Right cardiac atrium (tissue), 5 donors: ENCODE measurements at regions of chr20 and their contacts with region 1.

Region 1: GRCh38 chr20:47886460-47887041 is 101.3 kb upstream of the SULF2 start:
- DNase-seq: no peak
- ATAC-seq: no peak
- H3K4me3 ChIP-seq: no peak overlapping the region
- H3K27ac ChIP-seq: no peak overlapping the region
- H3K4me1 ChIP-seq: no peaks in the 10 kb centered on the region
- H3K27me3 ChIP-seq: no peaks in the 10 kb centered on the region

Region 2: DNA sequence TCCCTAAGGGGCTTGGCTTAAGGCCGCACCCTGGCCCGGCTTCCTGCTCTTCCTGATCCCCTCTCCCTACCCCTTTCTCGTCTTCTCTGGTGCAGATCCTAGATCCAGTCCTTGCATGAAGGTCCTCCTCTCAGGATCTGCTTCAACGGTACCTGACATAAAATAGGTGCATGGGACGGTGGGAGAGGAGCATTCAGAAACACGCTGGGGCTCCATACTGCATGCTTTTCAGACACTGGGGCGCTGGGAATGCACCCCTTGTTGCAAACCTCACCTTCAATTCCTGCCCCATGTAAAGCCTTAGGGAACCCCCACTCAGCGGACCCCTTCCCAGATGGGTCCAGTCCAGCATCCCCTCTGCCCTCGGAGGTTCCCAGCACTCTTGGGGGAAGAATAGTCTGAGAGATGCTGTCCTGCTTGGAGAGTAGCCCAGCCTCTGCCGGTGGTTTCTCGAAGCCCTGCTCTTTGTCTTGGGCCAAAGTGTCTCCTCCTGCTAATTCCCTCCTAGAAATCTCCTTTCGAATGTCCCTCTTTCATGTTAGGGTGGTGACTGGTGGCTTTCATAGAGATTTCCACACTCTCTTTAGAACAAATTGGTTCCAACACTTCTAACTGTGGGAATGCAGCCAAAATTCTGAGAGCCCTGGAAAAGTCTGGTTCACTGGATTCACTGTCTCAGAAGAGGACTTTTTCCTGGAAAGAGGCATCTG is 76.5 kb before region 1 on chr20:
- intact Hi-C with region 1: loop called in 1 of 4 experiments (anchors 10 kb)
- DNase-seq: no peak
- ATAC-seq: no peak
- H3K4me3 ChIP-seq: no peak overlapping the region
- H3K27ac ChIP-seq: no peak overlapping the region
- H3K4me1 ChIP-seq: no peaks in the 10 kb centered on the region
- H3K27me3 ChIP-seq: no peaks in the 10 kb centered on the region

Region 3: GRCh38 chr20:47821481-47822439 is 64.8 kb before region 1 on chr20:
- intact Hi-C with region 1: loop called in 2 of 4 experiments (anchors 10 kb)
- DNase-seq: no peak
- ATAC-seq: no peak
- H3K4me3 ChIP-seq: no peak overlapping the region
- H3K27ac ChIP-seq: no peak overlapping the region
- H3K4me1 ChIP-seq: no peaks in the 10 kb centered on the region
- H3K27me3 ChIP-seq: no peaks in the 10 kb centered on the region

Region 4: GRCh38 chr20:48523212-48523941 is 636.8 kb after region 1 on chr20:
- intact Hi-C with region 1: loop called in 2 of 4 experiments (anchors 5 to 10 kb)
- DNase-seq: no peak
- ATAC-seq: peak; percentile 45 to 66
- H3K4me3 ChIP-seq: no peak overlapping the region
- H3K27ac ChIP-seq: no peak overlapping the region
- H3K4me1 ChIP-seq: no peaks in the 10 kb centered on the region
- H3K27me3 ChIP-seq: no peaks in the 10 kb centered on the region